A673 (cell line): ENCODE measurements at regions of chr18 and their contacts with region 1.

Region 1: GRCh38 chr18:4960578-4960977 is 236.5 kb downstream of the AKAIN1 start:
- DNase-seq: no peak
- H3K4me3 ChIP-seq: no peak overlapping the region
- H3K27ac ChIP-seq: no peak overlapping the region
- H3K4me1 ChIP-seq: no peaks in the 10 kb centered on the region
- H3K27me3 ChIP-seq: no peaks in the 10 kb centered on the region
- CTCF ChIP-seq: no peak

Region 2: GRCh38 chr18:4789506-4789905 is 171.1 kb before region 1 on chr18:
- CTCF ChIA-PET with region 1: no interaction called
- POLR2A ChIA-PET with region 1: no interaction called
- intact Hi-C with region 1: loop called (anchors 10 kb)
- DNase-seq: no peak
- H3K4me3 ChIP-seq: no peak overlapping the region
- H3K27ac ChIP-seq: no peak overlapping the region
- H3K4me1 ChIP-seq: no peaks in the 10 kb centered on the region
- H3K27me3 ChIP-seq: peaks cover 15% of the 10 kb centered on the region
- CTCF ChIP-seq: no peak